ENCODE measurements at regions of chr7 and their contacts with region 1.

Region 1: DNA sequence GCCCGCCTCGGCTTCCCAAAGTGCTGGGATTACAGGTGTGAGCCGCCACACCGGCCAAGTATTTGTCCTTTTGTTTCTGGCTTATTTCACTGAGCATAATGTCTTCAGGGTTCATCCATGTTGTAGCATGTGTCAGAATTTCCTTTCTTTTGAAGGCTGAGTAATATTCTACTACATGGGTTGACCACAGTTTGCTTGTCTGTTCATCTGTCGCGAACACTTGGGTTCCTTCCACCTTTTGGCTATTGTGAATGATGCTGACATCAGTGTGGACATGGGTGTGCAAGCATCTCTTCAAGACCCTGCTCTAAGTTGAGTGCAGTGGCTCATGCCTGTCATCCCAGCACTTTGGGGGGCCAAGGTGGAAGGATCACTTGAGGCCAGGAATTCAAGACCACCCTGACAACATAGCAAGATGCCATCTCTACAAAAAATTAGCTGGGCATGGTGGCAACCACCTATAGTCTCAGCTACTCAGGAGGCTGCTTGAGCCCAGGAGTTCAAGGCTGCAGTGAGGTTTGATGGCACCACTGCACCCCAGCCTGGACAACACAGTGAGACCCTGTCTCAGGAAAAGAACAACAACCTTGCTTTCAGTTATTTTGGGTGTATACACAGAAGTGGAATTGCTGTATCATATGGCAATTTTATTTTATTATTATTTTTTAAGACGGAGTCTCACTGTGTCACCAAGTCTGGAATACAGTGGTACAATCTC is 17.0 kb downstream of the CHST12 start:
- H3K4me3 Mint-ChIP-seq: no peak overlapping the region
- H3K27ac Mint-ChIP-seq: no peak overlapping the region
- H3K4me1 Mint-ChIP-seq: peaks cover 18% of the 10 kb centered on the region
- H3K27me3 Mint-ChIP-seq: no peaks in the 10 kb centered on the region

Region 2: GRCh38 chr7:2299131-2299829 is 121.1 kb before region 1 on chr7:
- intact Hi-C with region 1: no loop called
- H3K4me3 Mint-ChIP-seq: peak overlapping the region; percentile 69
- H3K27ac Mint-ChIP-seq: peak overlapping the region; percentile 82
- H3K4me1 Mint-ChIP-seq: peaks cover 84% of the 10 kb centered on the region
- H3K27me3 Mint-ChIP-seq: no peaks in the 10 kb centered on the region

Region 3: DNA sequence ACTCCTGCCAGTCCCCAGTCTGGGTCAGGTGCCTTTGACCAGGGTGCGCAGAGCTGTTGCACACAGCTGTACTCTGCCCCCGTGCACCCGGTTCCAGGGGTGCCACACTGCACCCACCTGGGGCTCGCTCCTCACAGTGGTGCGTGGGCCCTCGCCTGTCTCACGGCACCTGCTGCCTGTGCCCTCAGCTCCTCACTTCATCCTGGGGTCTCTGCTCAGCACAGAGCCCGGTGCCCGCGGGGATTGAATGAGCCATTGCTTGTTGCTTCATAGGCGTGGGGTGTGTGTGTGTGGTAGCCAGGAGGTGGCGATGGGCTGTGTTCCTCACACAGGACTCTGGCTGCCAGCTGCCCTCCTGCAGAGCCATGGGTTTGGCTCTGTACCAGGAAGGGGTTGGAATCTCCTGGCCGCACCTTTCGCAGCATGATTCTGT is 47.2 kb before region 1 on chr7:
- intact Hi-C with region 1: loop called (anchors 10 kb)
- H3K4me3 Mint-ChIP-seq: no peak overlapping the region
- H3K27ac Mint-ChIP-seq: no peak overlapping the region
- H3K4me1 Mint-ChIP-seq: peaks cover 2% of the 10 kb centered on the region
- H3K27me3 Mint-ChIP-seq: no peaks in the 10 kb centered on the region

Region 4: GRCh38 chr7:2497500-2498336 is 77.3 kb after region 1 on chr7:
- intact Hi-C with region 1: no loop called
- H3K4me3 Mint-ChIP-seq: no peak overlapping the region
- H3K27ac Mint-ChIP-seq: no peak overlapping the region
- H3K4me1 Mint-ChIP-seq: peaks cover 14% of the 10 kb centered on the region
- H3K27me3 Mint-ChIP-seq: peaks cover 67% of the 10 kb centered on the region